Brain microvascular endothelial cell (primary cell): ENCODE measurements at regions of chr2 and their contacts with region 1.

Region 1: GRCh38 chr2:231308631-231309428 is 86.7 kb upstream of the B3GNT7 start:
- DNase-seq: peak; percentile 78
- H3K4me3 ChIP-seq: no peak overlapping the region
- H3K27ac ChIP-seq: no peak overlapping the region
- H3K27me3 ChIP-seq: no peaks in the 10 kb centered on the region
- CTCF ChIP-seq: no peak

Region 2: GRCh38 chr2:231411831-231412617 is 103.2 kb after region 1 on chr2:
- in situ Hi-C with region 1: loop called (anchors 25 kb)
- DNase-seq: peak; percentile 73
- H3K4me3 ChIP-seq: peak overlapping the region; percentile 61
- H3K27ac ChIP-seq: peak overlapping the region; percentile 20
- H3K27me3 ChIP-seq: no peaks in the 10 kb centered on the region
- CTCF ChIP-seq: peak; percentile 90

Region 3: GRCh38 chr2:231489990-231490389 is 181.2 kb after region 1 on chr2:
- in situ Hi-C with region 1: no loop called
- DNase-seq: peak; percentile 24
- H3K4me3 ChIP-seq: no peak overlapping the region
- H3K27ac ChIP-seq: no peak overlapping the region
- H3K27me3 ChIP-seq: no peaks in the 10 kb centered on the region
- CTCF ChIP-seq: peak; percentile 57